ENCODE measurements at regions of chr16 and their contacts with region 1.

Region 1: GRCh38 chr16:76676356-76676755 is 399.2 kb downstream of the CNTNAP4 start:
- DNase-seq: no peak
- ATAC-seq: no peak

Region 2: GRCh38 chr16:76946879-76947278 is 270.5 kb after region 1 on chr16:
- intact Hi-C with region 1: no loop called
- DNase-seq: no peak
- ATAC-seq: peak; percentile 94 to 97

Region 3: DNA sequence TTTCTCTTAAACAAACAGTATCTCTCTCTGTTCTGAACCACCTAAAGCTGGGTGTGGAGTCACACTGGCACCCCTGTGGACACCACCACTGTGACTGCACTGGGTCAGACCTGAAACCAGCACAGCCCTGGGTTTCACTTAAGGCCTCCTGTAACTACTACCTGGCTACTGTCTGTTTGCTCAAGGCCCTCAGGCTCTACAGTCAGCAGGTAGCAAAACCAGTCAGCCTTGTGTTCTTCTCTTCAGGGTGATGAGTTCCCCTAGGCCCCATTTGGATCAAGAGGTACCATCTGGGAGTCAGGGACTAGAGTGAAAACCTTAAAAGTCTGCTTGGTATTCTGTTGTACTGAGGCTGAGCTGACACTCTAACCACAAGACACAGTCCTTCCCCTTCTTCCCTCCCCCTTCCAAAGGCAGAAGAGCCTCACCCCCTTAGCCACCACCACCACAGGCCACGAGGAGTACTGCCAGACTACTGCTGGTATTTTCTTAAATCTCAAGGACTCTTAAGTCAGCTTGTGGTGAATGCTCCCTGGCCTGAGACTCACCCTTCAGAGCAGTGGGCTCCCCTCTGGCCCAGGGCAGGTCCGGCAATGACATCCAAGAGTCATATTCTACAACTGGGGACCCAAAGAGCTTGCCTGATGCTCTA is 361.5 kb after region 1 on chr16:
- intact Hi-C with region 1: loop called in 1 of 2 experiments (anchors 10 kb)
- DNase-seq: no peak
- ATAC-seq: no peak